ENCODE measurements at regions of chr21 and their contacts with region 1.

Region 1: DNA sequence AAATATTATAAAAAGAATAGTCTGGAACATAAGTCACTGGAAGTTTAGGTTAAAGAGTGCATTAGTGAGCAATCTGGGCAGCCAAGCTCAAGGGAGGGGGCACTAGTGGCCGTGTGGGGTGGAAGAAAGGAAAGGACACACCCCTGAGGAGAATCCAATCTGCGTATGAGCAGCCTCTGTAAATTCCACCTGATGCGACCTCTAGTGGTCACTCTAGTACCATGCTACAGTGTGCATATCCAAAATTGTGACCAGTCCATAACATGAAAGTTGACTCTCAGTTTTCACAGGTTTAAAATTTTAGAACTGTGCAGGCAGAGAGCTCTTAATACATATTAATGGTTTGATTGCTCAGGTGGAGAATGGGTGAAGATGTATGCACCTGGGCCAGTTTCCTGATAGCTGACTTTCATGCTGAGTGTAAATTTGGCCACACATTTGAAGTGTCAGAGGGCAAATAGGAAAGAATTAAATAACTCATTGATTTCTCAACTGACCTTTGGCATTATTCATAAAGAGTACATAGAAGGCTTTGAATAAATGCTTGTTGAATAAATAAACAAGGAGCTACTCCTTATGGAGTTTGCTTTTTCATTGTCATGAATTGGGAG is 105.9 kb upstream of the C21orf91 start:
- DNase-seq: peak; percentile 59
- ATAC-seq: peak; percentile 100
- H3K4me3 ChIP-seq: no peak overlapping the region
- H3K27ac ChIP-seq: no peak overlapping the region
- H3K4me1 ChIP-seq: no peaks in the 10 kb centered on the region
- H3K27me3 ChIP-seq: no peaks in the 10 kb centered on the region; the same call in 1 of the 2 replicates
- CTCF ChIP-seq: peak; percentile 32 to 89 (median 86); a peak in 5 of 6 replicates
- POLR2A ChIP-seq: no peak
- RAD21 ChIP-seq: peak; percentile 38; the same call in 1 of the 2 replicates

Region 2: GRCh38 chr21:16002874-16003466 is 1922.1 kb before region 1 on chr21:
- CTCF ChIA-PET with region 1: no interaction called
- POLR2A ChIA-PET with region 1: no interaction called
- RAD21 ChIA-PET with region 1: no interaction called
- intact Hi-C with region 1: no loop called
- DNase-seq: no peak
- ATAC-seq: no peak
- H3K4me3 ChIP-seq: no peak overlapping the region
- H3K27ac ChIP-seq: no peak overlapping the region
- H3K4me1 ChIP-seq: no peaks in the 10 kb centered on the region
- H3K27me3 ChIP-seq: no peaks in the 10 kb centered on the region
- CTCF ChIP-seq: peak in 1 of 3 experiments; percentile 20; a peak in 1 of 6 replicates
- POLR2A ChIP-seq: no peak
- RAD21 ChIP-seq: no peak

Region 3: GRCh38 chr21:17393413-17393812 is 531.7 kb before region 1 on chr21:
- CTCF ChIA-PET with region 1: no interaction called
- POLR2A ChIA-PET with region 1: no interaction called
- RAD21 ChIA-PET with region 1: no interaction called
- intact Hi-C with region 1: loop called (anchors 10 kb)
- DNase-seq: no peak
- ATAC-seq: no peak
- H3K4me3 ChIP-seq: no peak overlapping the region
- H3K27ac ChIP-seq: no peak overlapping the region
- H3K4me1 ChIP-seq: no peaks in the 10 kb centered on the region
- H3K27me3 ChIP-seq: no peaks in the 10 kb centered on the region; the same call in 1 of the 2 replicates
- CTCF ChIP-seq: no peak
- POLR2A ChIP-seq: no peak
- RAD21 ChIP-seq: no peak

Region 4: DNA sequence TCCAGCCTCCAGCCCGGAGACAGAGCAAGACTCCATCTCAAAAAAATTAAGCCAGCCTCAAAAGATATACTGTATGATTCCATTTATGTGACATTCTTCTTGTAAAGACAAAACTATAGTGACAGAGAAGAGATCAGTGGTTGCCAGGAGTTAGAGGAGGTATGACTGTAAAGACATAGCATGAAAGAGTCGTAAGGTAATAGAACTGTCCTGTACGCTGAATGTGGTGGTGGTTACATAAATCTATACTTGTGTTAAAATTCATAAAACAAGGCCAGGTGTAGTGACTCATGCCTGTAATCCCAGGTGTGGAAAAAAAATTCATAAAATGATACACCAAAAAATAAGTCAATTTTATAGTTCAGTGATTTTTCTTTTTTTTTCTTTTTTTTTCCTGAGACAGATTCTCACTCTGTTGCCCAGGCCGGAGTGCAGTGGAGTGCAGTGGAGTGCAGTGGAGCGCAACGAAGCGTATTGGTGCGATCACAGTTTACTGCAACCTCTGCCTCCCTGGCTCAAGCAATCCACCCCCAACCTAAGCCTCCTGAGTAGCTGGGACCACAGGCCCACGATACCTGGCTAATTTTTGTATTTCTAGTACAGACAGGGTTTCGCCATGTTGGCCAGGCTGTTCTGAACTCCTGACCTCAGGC is 497.1 kb before region 1 on chr21:
- CTCF ChIA-PET with region 1: no interaction called
- POLR2A ChIA-PET with region 1: no interaction called
- RAD21 ChIA-PET with region 1: no interaction called
- intact Hi-C with region 1: no loop called
- DNase-seq: no peak
- ATAC-seq: no peak
- H3K4me3 ChIP-seq: no peak overlapping the region
- H3K27ac ChIP-seq: no peak overlapping the region
- H3K4me1 ChIP-seq: no peaks in the 10 kb centered on the region
- H3K27me3 ChIP-seq: no peaks in the 10 kb centered on the region
- CTCF ChIP-seq: no peak
- POLR2A ChIP-seq: no peak
- RAD21 ChIP-seq: no peak

Region 5: DNA sequence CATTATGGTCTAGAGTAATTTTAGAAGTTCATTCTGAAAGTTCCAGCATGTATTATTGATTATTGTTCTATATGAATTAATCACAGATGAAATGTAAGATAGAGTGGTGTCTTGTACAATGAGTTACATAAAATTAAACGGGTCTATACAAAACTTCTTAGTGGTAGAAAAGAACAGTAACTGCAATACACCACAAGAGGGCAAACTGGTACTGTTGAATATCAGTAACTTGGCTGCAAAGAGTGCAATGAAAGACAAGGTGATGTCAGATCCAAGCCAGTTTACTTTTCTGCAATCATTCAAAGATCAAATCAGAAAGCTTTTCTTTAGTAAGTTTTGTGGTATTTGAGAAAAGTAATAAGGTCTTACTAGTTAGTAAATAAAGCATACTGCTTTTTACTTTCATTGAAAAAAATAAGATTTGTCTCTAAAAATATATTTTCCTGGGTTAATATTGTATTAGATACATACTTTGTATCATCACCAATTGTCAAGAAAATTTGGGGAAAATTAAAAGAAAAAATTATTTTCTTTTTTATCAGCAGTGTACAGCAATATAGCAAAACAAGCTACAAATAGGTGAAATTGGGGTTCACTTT is 246.0 kb before region 1 on chr21:
- CTCF ChIA-PET with region 1: interaction called, 14 read pairs
- POLR2A ChIA-PET with region 1: no interaction called
- RAD21 ChIA-PET with region 1: no interaction called
- intact Hi-C with region 1: loop called (anchors 1 kb)
- DNase-seq: peak; percentile 37
- ATAC-seq: peak; percentile 74
- H3K4me3 ChIP-seq: no peak overlapping the region
- H3K27ac ChIP-seq: no peak overlapping the region
- H3K4me1 ChIP-seq: no peaks in the 10 kb centered on the region
- H3K27me3 ChIP-seq: no peaks in the 10 kb centered on the region
- CTCF ChIP-seq: peak; percentile 30 to 82 (median 68); a peak in 4 of 6 replicates
- POLR2A ChIP-seq: no peak
- RAD21 ChIP-seq: peak; percentile 63

Region 6: GRCh38 chr21:17688912-17689874 is 235.9 kb before region 1 on chr21:
- CTCF ChIA-PET with region 1: interaction called, 19 read pairs
- POLR2A ChIA-PET with region 1: no interaction called
- RAD21 ChIA-PET with region 1: no interaction called
- intact Hi-C with region 1: no loop called
- DNase-seq: peak; percentile 4
- ATAC-seq: peak; percentile 69
- H3K4me3 ChIP-seq: peak overlapping the region; percentile 11 to 34; a peak in 3 of 4 replicates
- H3K27ac ChIP-seq: peak overlapping the region; percentile 43; the same call in 1 of the 2 replicates
- H3K4me1 ChIP-seq: peaks cover 4 to 11% of the 10 kb centered on the region in 2 experiments
- H3K27me3 ChIP-seq: no peaks in the 10 kb centered on the region
- CTCF ChIP-seq: peak in 2 of 3 experiments; percentile 44 to 59; a peak in 4 of 6 replicates
- POLR2A ChIP-seq: no peak
- RAD21 ChIP-seq: no peak

Region 7: DNA sequence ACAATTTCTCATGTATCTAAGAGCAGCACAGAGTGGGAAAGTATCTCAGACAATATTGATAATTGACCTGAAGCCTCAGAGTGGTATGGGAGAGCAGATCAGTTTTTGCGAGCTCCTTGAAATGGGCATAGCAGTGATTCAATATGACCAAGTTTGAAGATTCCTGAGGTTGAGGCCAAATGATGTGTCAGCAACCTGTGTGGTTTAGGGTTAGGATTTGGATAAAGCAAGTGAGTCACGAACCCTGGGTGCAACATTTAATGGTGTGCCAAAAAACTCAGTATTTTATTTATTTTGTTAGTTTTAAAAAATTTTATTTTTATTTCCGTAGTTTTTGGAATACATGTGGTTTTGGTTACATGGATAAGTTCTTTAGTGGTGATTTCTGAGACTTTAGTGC is 13.5 kb before region 1 on chr21:
- CTCF ChIA-PET with region 1: interaction called, 17 read pairs
- POLR2A ChIA-PET with region 1: no interaction called
- RAD21 ChIA-PET with region 1: no interaction called
- intact Hi-C with region 1: no loop called
- DNase-seq: no peak
- ATAC-seq: no peak
- H3K4me3 ChIP-seq: no peak overlapping the region
- H3K27ac ChIP-seq: no peak overlapping the region
- H3K4me1 ChIP-seq: no peaks in the 10 kb centered on the region
- H3K27me3 ChIP-seq: 0 out of 2 replicates have a peak, but pooled peaks cover 3% of the 10 kb centered on the region
- CTCF ChIP-seq: no peak
- POLR2A ChIP-seq: no peak
- RAD21 ChIP-seq: no peak